Body of pancreas (tissue), 4 donors: ENCODE measurements at regions of chr19 and their contacts with region 1.

Region 1: GRCh38 chr19:10491472-10492047 is 11.6 kb downstream of the KEAP1 start:
- DNase-seq: no peak
- ATAC-seq: no peak
- H3K4me3 ChIP-seq: no peak overlapping the region
- H3K27ac ChIP-seq: no peak overlapping the region
- H3K4me1 ChIP-seq: no peaks in the 10 kb centered on the region
- H3K27me3 ChIP-seq: no peaks in the 10 kb centered on the region
- CTCF ChIP-seq: no peak
- POLR2A ChIP-seq: no peak

Region 2: GRCh38 chr19:10137751-10138682 is 353.5 kb before region 1 on chr19:
- intact Hi-C with region 1: no loop called
- DNase-seq: no peak
- ATAC-seq: no peak
- H3K4me3 ChIP-seq: no peak overlapping the region
- H3K27ac ChIP-seq: no peak overlapping the region
- H3K4me1 ChIP-seq: no peaks in the 10 kb centered on the region
- H3K27me3 ChIP-seq: no peaks in the 10 kb centered on the region
- CTCF ChIP-seq: no peak
- POLR2A ChIP-seq: no peak

Region 3: DNA sequence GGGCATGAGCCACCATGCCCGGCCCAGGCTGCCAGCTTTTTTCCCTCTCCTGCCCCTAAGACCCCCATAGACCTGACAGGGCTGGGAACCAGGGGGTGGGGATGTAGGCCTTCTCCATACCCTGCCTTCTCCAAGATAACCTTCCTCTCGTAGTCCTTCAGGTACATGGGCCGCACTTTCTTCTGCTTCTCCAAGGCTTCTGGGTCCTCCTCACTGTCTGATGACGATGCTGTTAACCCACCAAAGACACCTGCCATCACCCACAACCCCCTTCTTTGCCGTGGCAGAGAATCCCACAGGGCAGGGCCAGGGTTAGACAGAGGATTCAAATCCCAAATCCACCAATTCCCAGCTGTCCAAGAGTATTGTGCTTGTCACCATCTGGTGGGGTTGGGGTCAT is 71.0 kb after region 1 on chr19:
- intact Hi-C with region 1: loop called (anchors 5 kb)
- DNase-seq: no peak
- ATAC-seq: no peak
- H3K4me3 ChIP-seq: no peak overlapping the region
- H3K27ac ChIP-seq: no peak overlapping the region
- H3K4me1 ChIP-seq: peaks cover 25% of the 10 kb centered on the region
- H3K27me3 ChIP-seq: no peaks in the 10 kb centered on the region
- CTCF ChIP-seq: no peak
- POLR2A ChIP-seq: no peak